ENCODE measurements at regions of chr18 and their contacts with region 1.

Region 1: GRCh38 chr18:60246606-60247005 is 126.0 kb downstream of the MC4R start:
- DNase-seq: peak; percentile 49
- H3K4me3 ChIP-seq: peak overlapping the region; percentile 28
- H3K27ac ChIP-seq: peak overlapping the region; percentile 94
- H3K4me1 ChIP-seq: peaks cover 50% of the 10 kb centered on the region
- CTCF ChIP-seq: no peak

Region 2: DNA sequence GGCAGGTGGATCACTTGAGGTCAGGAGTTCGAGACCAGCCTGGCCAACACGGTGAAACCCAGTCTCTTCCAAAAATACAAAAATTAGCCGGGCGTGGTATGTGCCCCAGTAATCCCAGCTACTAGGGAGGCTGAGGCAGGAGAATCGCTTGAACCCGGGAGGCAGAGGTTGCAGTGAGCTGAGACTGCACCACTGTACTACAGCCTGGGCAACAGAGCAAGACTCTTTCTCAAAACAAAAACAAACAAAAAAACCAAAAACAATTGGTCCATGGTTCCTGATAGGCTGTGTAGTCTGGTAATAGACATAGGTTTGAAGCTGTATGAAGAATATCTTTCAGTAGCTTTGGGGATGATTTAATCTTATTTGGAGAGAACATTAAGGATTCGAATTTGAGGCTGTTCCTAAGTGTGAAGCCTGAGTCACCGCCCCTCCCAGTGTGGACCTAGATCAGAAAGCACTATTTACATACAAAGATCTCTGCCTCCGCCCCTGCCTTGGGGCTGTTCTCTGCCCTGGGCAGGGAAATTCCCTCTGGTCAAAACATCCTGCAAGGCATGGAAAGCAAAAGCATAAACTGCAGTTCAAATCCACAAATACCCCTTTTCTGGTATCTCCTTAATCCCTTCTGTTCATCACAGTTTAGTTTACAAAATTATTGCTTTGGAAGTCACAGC is 399.7 kb before region 1 on chr18:
- CTCF ChIA-PET with region 1: no interaction called
- POLR2A ChIA-PET with region 1: no interaction called
- intact Hi-C with region 1: loop called (anchors 10 kb)
- DNase-seq: no peak
- H3K4me3 ChIP-seq: no peak overlapping the region
- H3K27ac ChIP-seq: peak overlapping the region; percentile 28
- H3K4me1 ChIP-seq: peaks cover 32% of the 10 kb centered on the region
- CTCF ChIP-seq: no peak

Region 3: DNA sequence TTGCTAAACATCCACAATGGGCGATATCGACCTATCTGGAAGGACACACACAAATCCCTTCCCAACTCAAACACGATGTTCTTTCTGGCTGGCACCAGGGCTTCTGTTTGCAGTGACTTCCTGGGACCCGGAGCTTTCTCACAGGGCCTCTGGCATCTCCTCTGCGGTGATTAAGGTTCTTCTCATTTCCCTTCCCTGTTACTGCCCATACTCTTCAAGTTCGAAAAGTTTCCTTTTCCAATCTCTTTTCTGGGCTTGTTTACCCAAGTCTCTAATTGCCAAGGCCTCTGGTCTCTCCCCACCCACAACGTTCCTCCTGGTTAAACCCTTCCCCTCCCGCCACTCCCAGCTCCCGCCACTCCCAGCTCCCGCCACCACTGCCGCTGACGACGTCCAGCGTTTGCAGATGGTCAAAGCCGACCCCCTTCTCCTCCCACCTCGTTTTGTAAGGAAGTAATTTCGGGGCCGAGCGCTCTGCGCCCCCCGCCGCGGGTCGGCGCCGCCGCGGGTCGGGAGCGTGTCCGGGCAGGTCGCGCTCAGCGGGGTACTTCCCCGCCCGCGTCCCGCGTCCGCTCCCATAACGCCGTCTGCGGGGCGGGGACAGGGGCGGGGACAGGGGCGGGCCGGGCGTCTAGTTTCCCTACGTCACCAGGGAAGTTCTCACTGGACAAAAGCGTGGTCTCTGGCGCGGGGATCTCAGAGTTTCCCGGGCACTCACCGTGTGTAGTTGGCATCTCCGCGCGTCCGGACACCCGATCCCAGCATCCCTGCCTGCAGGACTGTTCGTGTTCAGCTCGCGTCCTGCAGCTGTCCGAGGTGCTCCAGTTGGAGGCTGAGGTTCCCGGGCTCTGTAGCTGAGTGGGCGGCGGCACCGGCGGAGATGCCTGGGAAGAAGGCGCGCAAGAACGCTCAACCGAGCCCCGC is 347.0 kb before region 1 on chr18 and contains the start of gene PMAIP1:
- CTCF ChIA-PET with region 1: no interaction called
- POLR2A ChIA-PET with region 1: no interaction called
- intact Hi-C with region 1: no loop called
- DNase-seq: peak; percentile 81
- H3K4me3 ChIP-seq: peak within 1 kb of the TSS; percentile 87
- H3K27ac ChIP-seq: peak within 1 kb of the TSS; percentile 81
- H3K4me1 ChIP-seq: peaks cover 31% of the 10 kb centered on the region
- CTCF ChIP-seq: no peak
- total RNA-seq, gene PMAIP1: 22.9 and 25.4 TPM in 2 replicates

Region 4: DNA sequence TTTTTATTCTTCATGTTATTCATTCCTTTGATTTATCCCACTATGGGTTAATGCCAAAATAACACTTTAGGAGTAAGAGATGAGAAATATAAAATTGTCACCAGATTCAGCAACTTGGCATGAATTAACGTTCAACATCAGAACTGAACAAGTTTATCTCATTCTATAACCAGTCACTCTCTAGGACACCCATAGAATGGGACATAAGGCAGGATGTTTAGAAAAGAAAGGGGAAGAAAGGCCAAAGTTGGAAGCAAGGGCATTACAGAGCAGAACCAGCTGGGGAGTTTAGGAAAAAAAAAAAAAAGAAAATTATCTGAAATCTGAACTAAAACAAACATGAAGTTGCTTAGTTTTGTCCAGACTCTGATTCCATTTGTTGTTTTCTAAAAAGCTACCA is 135.8 kb before region 1 on chr18:
- CTCF ChIA-PET with region 1: no interaction called
- POLR2A ChIA-PET with region 1: no interaction called
- intact Hi-C with region 1: no loop called
- DNase-seq: no peak
- H3K4me3 ChIP-seq: no peak overlapping the region
- H3K27ac ChIP-seq: no peak overlapping the region
- H3K4me1 ChIP-seq: no peaks in the 10 kb centered on the region
- CTCF ChIP-seq: no peak

Region 5: GRCh38 chr18:60413944-60414547 is 167.4 kb after region 1 on chr18:
- CTCF ChIA-PET with region 1: no interaction called
- POLR2A ChIA-PET with region 1: no interaction called
- intact Hi-C with region 1: loop called (anchors 2 kb)
- DNase-seq: peak; percentile 37
- H3K4me3 ChIP-seq: no peak overlapping the region
- H3K27ac ChIP-seq: no peak overlapping the region
- H3K4me1 ChIP-seq: no peaks in the 10 kb centered on the region
- CTCF ChIP-seq: peak; percentile 75

Measured in OCI-LY7 (cell line).